ENCODE measurements at regions of chr17 and their contacts with region 1.

Region 1: DNA sequence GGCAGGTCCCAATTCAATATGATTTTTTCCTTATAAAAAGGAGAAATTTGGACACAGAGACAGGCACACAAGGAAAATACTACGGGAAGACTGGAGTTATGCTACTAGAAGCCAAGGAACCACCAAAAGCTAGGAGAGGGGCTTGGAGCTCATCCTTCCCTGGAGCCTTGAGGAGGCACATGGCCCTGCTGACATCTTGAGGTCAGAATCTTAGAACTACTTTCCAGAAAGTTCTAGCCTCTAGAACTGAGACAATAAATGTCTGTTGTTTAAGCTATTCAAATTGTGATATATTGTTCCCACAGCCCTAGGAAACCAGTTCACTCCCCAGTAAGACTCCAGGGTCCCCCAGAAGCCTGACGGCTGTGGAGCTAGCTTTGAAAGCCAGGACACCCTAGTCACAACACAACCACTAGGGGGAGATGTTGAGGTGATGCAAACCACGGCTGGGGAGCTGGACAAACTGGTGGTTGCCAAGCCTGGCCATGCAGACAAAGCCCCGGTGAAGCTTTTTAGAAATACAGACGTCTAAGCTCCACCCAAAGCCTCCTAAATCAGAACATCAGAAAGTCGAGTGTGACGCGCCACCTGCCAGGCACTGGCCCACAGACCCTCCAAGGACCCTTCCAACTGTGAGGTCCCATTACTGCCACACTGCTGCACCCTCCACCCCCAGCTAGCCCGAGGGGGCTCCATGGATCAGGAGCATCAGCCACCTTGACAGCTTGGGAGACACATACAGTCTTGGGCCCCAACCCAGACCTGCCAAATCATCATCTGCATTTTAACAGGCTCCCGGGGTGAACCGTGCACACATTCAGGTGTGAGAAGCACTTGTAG is 106.4 kb downstream of the SLC39A11 start:
- DNase-seq: peak in 4 of 5 donors; percentile 42 to 49 (median 44)
- H3K4me3 ChIP-seq: no peak overlapping the region
- H3K4me3 Mint-ChIP-seq: no peak overlapping the region
- H3K27ac ChIP-seq: no peak overlapping the region
- H3K27ac Mint-ChIP-seq: no peak overlapping the region
- H3K4me1 ChIP-seq: no peaks in the 10 kb centered on the region
- H3K4me1 Mint-ChIP-seq: peaks cover 0 to 3% (median under 1%) of the 10 kb centered on the region in 4 donors
- H3K27me3 ChIP-seq: no peaks in the 10 kb centered on the region
- H3K27me3 Mint-ChIP-seq: no peaks in the 10 kb centered on the region

Region 2: DNA sequence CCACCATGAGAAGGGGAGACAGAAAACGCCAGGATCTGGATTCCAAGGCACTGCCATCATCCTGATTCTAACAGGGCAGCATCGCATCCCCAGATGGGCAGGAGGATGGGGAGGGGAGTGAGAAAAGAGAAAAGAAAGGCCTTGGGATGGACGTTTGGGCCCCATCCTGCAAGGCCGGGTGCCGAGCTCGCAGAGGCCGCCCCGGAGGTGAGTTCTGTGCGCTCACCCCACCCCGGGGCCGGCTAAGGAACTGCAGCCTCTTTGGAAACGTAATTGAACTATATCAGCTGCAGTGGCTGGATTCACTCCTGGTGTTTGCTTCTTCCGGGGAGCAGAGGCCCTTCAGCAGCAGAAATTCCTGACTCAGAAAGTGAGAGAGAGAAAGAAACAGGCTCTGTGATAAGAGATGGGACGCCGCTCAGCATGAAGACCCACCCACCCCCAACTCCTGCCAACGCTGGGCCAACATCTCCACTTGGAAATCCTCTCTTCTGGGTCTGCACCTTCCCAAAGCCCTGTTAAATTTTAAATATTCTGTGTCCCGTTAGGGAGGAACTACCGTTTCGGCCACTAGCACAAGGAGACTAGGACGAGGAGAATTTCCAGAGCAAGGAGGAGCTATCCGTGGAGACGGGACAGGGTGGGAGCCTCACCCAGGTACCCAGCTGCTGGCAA is 170.2 kb after region 1 on chr17:
- CTCF ChIA-PET with region 1: interaction called, 36 read pairs
- POLR2A ChIA-PET with region 1: interaction called, 3 read pairs
- intact Hi-C with region 1: no loop called
- DNase-seq: peak in 4 of 5 donors; percentile 36 to 45 (median 37)
- H3K4me3 ChIP-seq: peak overlapping the region in 1 of 2 donors; percentile 5
- H3K4me3 Mint-ChIP-seq: no peak overlapping the region
- H3K27ac ChIP-seq: no peak overlapping the region
- H3K27ac Mint-ChIP-seq: no peak overlapping the region
- H3K4me1 ChIP-seq: peaks cover 5% of the 10 kb centered on the region
- H3K4me1 Mint-ChIP-seq: peaks cover 4 to 13% (median 10%) of the 10 kb centered on the region in 4 donors
- H3K27me3 ChIP-seq: peaks cover 7% of the 10 kb centered on the region
- H3K27me3 Mint-ChIP-seq: peaks cover 7 to 31% of the 10 kb centered on the region in 2 donors

Measured in CD4-positive, alpha-beta memory T cell (primary cell).